Activated CD4-positive, alpha-beta memory T cell treated with anti-CD3 and anti-CD28 coated beads, Interleukin-2, amount 10 ng/mL, durations not matched to agents 7 days and 5 days (primary cell): ENCODE measurements at regions of chr3 and their contacts with region 1.

Region 1: DNA sequence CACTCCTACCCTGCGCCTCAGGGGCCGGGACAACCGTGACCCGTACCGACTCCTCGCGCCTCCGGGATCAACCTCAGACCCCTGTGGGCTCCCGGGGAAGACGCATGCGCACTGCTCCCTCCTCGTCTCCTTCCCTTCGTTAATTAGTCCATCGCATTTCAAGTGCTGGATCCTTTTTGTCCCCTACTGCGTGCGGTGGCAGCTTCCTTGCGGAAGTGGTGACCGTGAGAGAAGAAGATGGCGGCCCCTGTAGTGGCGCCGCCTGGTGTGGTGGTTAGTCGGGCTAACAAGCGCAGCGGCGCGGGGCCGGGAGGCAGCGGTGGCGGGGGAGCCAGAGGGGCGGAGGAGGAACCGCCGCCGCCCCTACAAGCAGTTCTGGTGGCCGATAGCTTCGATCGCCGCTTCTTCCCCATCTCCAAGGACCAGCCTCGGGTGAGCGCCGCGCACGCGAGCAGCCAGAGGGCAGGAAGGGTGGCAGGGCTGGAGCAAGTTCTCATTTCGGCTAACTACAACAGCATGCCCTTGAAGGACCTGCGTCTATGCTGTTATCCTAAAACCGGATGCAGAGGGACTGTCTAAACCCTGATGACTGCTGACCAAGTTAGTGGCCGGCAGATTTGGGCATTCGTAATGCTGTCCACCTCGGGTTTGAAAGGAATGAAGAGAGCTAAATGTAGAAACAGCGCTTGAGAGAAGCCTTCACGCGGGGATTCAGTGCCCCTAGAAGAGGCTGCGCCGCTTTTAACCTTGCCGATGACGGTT is at the start of gene EIF2B5:
- DNase-seq: peak; percentile 91
- H3K4me3 Mint-ChIP-seq: peak within 1 kb of the TSS; percentile 98
- H3K27ac Mint-ChIP-seq: peak within 1 kb of the TSS; percentile 90
- H3K4me1 Mint-ChIP-seq: peaks cover 31% of the 10 kb centered on the region
- H3K27me3 Mint-ChIP-seq: no peaks in the 10 kb centered on the region
- total RNA-seq, gene EIF2B5: 45.9 to 47.8 TPM

Region 2: DNA sequence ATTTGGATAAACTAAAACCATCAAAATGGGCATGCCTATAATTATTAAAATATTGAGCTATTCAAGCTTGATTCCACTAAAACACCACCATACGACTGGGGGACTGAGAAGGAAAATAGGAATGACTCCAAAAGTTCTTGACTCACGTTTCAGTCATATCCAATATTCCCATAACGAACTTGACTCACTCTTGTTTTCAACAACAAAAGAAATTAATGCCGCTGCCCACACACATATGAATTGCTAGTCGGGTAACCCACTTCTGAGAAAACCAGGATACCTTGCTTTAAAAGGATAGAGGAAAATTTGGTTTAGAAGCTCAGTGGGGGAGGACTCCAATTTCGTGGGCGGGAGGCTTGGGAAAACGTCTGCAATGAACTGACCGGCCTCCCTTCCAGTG is 77.3 kb before region 1 on chr3:
- CTCF ChIA-PET with region 1: no interaction called
- POLR2A ChIA-PET with region 1: no interaction called
- DNase-seq: no peak
- H3K4me3 Mint-ChIP-seq: no peak overlapping the region
- H3K27ac Mint-ChIP-seq: no peak overlapping the region
- H3K4me1 Mint-ChIP-seq: no peaks in the 10 kb centered on the region
- H3K27me3 Mint-ChIP-seq: no peaks in the 10 kb centered on the region

Region 3: DNA sequence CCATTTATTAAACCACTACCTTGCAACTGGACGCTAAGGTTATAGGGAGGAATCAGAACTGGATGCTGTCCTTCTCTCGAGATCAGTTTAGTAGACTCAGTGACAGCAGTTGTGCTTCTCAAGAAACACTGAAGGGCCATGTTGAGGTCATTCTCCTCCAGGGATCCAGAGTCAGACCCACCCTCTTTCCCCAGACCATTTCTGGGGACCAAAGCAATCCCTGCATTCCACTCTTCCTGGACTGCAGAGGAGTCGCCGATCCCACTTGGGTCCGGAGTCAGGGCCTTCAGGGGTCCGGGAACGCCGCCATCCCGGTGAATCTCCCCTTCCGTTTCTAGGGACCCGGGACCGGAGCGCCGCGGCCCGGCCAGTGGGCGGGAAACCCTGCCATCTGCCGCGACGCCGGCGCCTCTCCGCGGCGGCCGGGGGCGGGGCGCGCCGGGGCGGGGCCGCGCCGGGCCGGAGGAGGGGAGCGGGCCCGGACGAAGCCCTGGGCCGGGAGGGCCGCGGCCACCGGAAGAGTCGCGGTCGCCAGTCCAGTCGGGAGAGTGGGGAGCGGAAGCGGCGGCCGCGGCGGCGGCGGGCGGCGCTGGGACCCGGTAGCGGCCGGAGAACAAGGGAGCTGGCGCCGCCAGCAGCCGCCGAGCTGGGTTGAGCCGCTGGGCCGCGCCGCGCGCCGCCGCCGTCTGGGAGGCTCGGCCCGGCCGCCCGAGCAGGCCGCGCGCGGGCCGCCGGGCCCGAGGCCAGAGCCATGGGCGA is 19.7 kb after region 1 on chr3 and contains the start of gene DVL3:
- CTCF ChIA-PET with region 1: interaction called, 4 read pairs
- POLR2A ChIA-PET with region 1: interaction called, 27 read pairs
- DNase-seq: peak; percentile 59
- H3K4me3 Mint-ChIP-seq: peak within 1 kb of the TSS; percentile 93
- H3K27ac Mint-ChIP-seq: peak within 1 kb of the TSS; percentile 79
- H3K4me1 Mint-ChIP-seq: peaks cover 25% of the 10 kb centered on the region
- H3K27me3 Mint-ChIP-seq: no peaks in the 10 kb centered on the region
- total RNA-seq, gene DVL3: 33.2 to 40.7 TPM

Region 4: DNA sequence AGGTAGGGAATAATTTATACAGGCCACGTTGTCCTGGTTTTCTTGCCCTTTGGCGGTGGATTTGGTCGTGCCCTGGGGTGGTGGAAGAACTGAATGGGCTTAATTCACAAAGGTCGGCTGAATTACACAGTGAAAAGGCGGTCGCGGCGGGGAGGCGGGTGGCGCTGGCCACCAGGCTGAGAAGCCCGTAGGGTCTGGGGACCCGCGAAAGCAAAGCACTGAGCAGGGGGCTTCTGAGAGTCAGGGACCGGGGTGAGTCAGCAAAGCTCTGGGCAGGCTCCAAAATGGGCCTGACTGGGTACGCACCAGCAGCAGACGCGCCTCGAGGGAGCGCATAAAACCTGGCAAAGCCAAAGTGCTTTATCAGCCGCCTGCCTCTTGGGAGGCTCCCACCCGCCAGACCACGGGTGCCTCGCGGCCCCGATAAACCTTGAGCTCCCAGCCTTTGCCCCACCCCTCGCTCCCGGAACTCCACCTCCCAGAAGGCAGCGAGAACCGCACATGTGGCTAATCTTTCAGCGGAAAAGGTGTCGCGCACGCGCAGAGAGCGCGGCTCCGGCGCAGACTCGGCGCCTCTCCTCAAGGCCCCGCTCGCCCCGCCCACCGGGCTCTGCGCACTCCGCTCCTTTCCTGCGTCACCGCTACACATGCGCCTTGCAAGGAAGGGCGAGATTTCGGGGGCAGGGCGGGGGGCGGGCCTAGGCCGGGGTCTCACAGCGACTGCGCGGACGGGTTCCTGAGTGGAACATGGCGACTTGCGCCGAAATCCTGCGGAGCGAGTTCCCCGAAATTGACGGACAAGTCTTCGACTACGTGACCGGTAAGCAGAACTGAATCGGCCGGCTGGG is 50.4 kb after region 1 on chr3 and contains the start of gene ABCF3:
- CTCF ChIA-PET with region 1: no interaction called
- POLR2A ChIA-PET with region 1: interaction called, 10 read pairs
- DNase-seq: peak; percentile 99
- H3K4me3 Mint-ChIP-seq: peak within 1 kb of the TSS; percentile 93
- H3K27ac Mint-ChIP-seq: peak within 1 kb of the TSS; percentile 88
- H3K4me1 Mint-ChIP-seq: peaks cover 36% of the 10 kb centered on the region
- H3K27me3 Mint-ChIP-seq: no peaks in the 10 kb centered on the region
- total RNA-seq, gene ABCF3: 53.7 to 60.1 TPM